ENCODE measurements at regions of chr14 and their contacts with region 1.

Region 1: DNA sequence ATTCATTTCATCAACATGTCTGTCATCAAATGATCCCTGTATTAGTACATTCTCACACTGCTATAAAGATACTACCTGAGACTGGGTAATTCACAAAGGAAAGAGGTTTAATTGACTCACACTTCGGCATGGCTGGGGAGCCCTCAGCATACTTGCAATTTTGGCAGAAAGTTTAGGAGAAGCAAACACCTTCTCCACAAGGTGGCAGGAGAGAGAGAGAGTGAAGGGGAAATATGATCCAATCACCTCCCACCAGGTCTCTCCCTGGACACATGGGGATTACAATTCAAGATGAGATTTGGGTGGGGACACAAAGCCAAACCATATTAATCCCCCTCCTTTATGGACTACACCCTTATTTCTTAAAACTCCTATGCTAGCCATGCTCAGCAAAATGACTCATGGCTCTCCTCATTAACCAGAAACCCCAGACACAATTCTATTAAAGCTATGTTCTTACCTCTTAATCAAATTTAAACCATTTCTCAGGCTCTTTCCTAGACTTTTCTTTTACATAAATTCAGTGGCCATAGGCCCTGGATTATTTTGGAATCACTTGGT is 932.3 kb downstream of the FLRT2 start:
- DNase-seq: peak; percentile 17 to 45 (median 37)
- ATAC-seq: peak; percentile 68
- H3K4me3 ChIP-seq: no peak overlapping the region
- H3K27ac ChIP-seq: no peak overlapping the region
- H3K4me1 ChIP-seq: no peaks in the 10 kb centered on the region
- H3K27me3 ChIP-seq: no peaks in the 10 kb centered on the region
- CTCF ChIP-seq: peak in 6 of 7 experiments; percentile 37 to 67 (median 60)
- POLR2A ChIP-seq: no peak

Region 2: GRCh38 chr14:86321151-86321550 is 141.1 kb before region 1 on chr14:
- intact Hi-C with region 1: no loop called
- DNase-seq: no peak
- ATAC-seq: no peak
- H3K4me3 ChIP-seq: no peak overlapping the region
- H3K27ac ChIP-seq: no peak overlapping the region
- H3K4me1 ChIP-seq: no peaks in the 10 kb centered on the region
- H3K27me3 ChIP-seq: no peaks in the 10 kb centered on the region
- CTCF ChIP-seq: no peak
- POLR2A ChIP-seq: no peak

Region 3: DNA sequence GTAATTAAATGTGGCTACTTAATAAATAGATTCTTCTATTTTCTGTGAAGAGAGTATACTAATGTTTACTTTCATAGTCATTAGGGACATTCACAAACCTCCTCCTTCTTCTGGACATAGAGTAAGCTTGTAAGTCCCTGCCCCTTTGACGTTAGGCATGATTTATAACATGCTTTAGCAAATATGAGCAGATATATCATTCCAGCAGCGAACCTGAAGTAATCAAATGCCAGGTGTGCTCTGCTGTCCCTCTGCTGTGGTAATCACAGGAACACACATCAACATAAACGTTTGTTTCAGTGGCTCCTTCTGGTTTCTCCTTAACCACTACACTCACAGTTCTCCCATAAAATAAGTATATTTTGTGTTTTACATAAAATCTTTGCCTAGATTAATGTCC is 29.5 kb after region 1 on chr14:
- intact Hi-C with region 1: no loop called
- DNase-seq: no peak
- ATAC-seq: no peak
- H3K4me3 ChIP-seq: no peak overlapping the region
- H3K27ac ChIP-seq: no peak overlapping the region
- H3K4me1 ChIP-seq: no peaks in the 10 kb centered on the region
- H3K27me3 ChIP-seq: no peaks in the 10 kb centered on the region
- CTCF ChIP-seq: no peak
- POLR2A ChIP-seq: no peak

Region 4: DNA sequence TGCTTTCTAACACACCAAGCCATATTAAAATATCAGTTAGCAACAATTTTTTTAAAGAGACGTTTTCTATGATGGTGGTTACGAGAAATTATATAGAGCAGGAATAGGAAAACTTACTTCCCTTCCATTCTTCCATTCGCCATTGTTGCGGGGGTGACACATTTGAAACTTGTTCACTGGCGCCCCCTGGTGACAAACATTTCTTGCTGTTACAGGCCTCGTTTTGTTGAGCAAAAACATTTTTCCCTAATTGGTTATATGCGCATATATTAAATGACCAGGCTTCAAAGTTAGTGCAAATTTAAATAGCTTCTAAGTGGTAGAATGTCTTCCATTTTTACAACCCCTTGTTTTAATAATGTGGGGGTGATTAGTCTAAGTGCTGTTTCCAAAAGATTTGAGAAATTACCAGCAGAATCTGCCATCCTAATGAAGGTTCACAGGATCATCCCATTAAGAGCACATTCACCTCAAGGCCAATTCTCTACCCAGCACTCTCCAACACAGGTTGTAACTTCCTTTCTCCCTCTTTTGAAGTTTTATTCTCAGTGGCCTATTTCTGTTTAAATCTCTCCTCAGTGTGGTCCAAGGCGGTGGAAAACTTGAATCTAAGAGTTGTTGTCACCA is 192.4 kb after region 1 on chr14:
- intact Hi-C with region 1: loop called (anchors 10 kb)
- DNase-seq: peak; percentile 79 to 90 (median 82)
- ATAC-seq: peak; percentile 60
- H3K4me3 ChIP-seq: no peak overlapping the region
- H3K27ac ChIP-seq: no peak overlapping the region
- H3K4me1 ChIP-seq: no peaks in the 10 kb centered on the region
- H3K27me3 ChIP-seq: no peaks in the 10 kb centered on the region
- CTCF ChIP-seq: peak; percentile 29 to 80 (median 64)
- POLR2A ChIP-seq: no peak

Region 5: DNA sequence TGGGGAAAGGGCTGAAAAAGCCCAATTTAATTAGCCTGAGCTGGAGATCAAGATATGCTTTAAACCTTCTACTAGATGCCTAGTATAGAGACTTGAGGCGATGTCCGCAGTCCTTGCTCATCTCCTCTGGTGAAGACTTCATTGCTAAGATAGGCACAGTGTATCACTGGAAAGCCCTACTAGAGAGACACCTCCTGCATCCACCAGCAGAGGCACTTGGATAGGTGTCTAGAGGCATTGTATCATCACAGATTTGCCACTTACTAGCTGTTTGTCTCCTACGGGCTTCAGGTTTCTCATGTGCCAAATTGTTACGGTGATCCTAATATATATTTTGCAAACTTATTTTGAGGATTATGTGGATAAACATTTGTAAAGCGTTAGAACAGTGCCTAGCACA is 482.2 kb after region 1 on chr14:
- intact Hi-C with region 1: no loop called
- DNase-seq: no peak
- ATAC-seq: no peak
- H3K4me3 ChIP-seq: no peak overlapping the region
- H3K27ac ChIP-seq: no peak overlapping the region
- H3K4me1 ChIP-seq: no peaks in the 10 kb centered on the region
- H3K27me3 ChIP-seq: no peaks in the 10 kb centered on the region
- CTCF ChIP-seq: no peak
- POLR2A ChIP-seq: no peak

Measured in body of pancreas (tissue), 4 donors.